AG04449 (cell line): ENCODE measurements at regions of chr5 and their contacts with region 1.

Region 1: DNA sequence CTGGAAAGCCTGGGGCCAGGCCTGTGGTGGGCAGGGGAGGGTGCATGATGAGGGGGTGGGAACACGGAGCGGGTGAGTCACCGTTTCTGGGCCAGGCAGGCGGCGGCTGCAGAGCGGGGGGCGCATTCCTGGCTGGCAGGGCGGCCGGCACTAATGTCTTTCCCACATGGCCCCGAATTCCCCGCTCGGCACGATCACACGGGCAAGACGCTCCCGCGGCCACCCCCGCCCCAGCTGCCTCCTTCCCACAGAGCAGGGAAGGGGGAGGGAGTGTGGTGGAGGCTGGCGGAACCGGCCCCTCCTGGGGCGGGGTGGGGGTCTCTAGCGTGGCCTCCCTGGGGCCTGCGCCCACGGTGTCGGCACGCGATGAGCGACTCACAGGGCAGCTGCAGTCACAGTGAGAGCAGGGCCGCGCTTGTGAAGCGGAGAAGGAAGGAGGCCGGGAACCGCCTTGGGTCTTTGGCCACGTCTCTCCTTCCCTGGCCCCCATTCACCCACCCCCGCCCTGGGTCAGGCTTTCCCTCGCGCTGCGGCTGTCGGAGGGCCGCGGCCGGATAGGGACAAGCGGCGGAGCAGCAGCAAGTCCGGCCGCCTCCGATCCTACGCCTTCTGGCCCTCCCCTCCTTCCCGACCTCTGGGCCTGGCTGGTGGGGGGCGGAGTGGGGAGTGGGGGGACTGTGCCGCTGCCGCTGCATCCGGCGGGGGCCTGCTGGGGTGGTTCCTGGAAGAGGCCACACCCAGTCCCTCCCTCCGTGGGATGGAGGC is 48.9 kb downstream of the CXXC5 start:
- DNase-seq: peak; percentile 78
- H3K4me3 ChIP-seq: peak overlapping the region; percentile 41
- CTCF ChIP-seq: no peak

Region 2: GRCh38 chr5:139660923-139661814 is 35.9 kb before region 1 on chr5:
- CTCF ChIA-PET with region 1: interaction called, 3 read pairs
- POLR2A ChIA-PET with region 1: interaction called, 11 read pairs
- DNase-seq: no peak
- H3K4me3 ChIP-seq: peak overlapping the region; percentile 20
- CTCF ChIP-seq: no peak

Region 3: DNA sequence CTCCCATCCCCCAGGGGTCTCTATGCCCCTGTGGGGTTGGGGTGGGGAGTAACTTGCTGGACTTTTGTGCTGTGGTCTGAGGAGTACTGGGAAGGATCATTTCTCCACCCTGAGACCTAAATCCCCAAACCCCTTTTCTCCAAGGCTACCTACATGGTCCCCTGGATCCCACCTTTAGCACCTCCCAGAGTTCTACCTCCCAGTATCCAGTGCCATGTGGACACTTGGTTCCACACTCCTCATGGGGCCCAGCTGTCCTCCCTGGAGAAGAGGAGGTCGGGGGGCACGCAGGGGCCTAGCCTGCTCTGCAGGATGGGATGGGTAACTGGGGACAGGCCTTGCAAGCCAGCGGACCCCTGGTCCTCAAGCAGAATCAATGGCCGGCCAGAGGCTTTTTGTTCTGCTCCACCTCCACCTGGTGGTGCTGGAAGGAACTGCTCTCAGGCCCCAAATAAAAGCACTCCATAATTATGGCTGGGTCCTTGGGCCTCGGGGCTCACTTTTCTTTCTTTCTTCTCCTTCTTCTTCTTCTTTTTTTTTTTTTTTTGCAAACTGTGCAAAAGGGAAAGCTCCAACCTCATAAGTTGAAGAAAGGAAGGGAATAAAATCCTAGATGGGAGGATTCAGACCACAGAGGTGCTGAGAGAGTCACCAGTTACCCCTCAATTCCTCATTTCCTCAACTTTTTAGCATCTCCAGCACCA is 166.9 kb after region 1 on chr5:
- CTCF ChIA-PET with region 1: no interaction called
- POLR2A ChIA-PET with region 1: no interaction called
- DNase-seq: no peak
- H3K4me3 ChIP-seq: no peak overlapping the region
- CTCF ChIP-seq: peak; percentile 72

Region 4: GRCh38 chr5:140054086-140054689 is 357.1 kb after region 1 on chr5:
- CTCF ChIA-PET with region 1: no interaction called
- POLR2A ChIA-PET with region 1: no interaction called
- DNase-seq: no peak
- H3K4me3 ChIP-seq: no peak overlapping the region
- CTCF ChIP-seq: no peak